ENCODE measurements at regions of chr10 and their contacts with region 1.

Region 1: DNA sequence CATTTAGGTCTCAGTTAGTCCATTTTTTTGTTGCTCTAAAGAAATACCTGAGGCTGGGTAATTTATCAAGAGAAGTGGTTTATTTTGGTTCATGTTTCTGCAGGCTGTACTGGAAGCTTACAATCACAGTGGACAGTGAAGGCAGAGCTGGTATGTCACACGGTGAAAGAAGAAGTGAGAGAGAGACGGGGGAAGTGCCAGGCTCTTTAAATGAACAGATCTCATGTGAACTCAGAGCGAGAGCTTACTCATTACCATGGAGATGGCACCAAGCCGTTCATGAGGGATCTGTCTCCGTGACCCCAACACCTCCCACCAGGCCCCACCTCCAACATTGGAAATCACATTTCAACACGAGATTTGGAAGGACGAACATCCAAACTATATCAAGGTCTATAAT is 18.9 kb upstream of the PNLIPRP3 start:
- DNase-seq: no peak
- ATAC-seq: no peak

Region 2: DNA sequence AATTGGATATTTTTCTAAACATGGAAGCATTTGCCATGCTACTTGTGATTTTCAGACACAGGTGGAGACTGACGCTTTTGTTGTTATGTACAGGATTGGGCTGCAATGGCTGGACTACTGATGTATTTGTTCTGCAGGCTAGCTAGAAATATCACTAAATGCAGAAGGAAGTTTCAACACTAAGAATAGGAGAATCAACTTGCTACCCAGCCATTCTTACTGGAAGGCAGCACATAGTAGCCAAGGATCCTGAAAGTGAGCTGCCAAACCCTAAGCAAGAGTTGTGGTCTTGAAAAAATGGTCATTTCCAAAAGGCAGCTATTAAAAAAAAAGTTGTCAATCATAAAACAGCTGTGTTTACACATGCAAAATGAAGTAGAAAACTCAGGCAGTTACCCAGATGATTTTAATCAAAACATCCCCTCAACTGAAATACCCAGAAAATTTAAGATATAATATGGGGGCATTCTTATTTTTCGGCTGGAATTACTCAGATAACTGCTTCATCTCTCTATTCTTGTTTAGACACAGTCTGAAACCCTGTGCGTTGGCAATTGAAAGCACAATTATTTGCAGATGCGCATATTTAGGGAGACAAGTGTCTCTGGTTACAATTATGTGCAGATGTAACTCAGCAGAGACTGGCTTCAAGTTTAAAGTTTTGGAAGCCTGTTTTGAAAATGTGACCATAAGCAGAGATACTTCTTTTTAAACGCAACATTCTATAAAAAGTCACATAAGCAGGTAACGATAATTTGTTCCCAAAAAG is 166.9 kb before region 1 on chr10:
- intact Hi-C with region 1: no loop called
- DNase-seq: no peak
- ATAC-seq: peak; percentile 64

Region 3: DNA sequence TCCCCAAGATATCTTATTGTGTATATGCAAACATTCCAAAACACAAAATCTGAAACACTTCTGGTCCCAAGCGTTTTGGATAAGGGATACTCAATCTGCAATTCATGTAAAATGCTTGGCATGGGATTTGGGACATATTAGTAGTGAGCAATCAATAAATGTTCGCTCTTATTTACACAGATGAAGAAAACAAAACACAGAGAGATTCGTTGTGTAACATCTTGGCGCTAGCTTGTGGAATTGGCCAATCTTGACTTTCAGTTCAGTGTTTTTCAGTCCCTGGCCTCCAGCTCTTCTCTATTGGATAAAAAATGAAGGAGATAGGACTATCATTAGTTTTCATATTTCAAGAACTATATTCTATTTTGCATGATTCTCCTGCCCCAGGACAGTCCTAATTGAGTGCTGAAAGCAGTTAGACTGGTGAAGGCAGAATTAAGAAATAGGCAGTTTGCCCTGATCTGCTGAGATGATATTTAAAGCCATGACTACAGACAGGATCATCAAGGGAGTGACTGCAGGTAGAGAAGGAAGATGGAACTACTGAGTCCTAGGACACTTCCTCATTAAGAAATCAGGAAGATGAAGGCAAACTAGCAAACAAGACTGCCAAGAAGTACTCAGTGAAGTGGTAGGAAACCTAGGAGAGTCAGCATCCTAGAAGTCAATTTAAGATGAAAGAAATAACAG is 20.7 kb after region 1 on chr10:
- intact Hi-C with region 1: loop called (anchors 2 kb)
- DNase-seq: no peak
- ATAC-seq: peak; percentile 83

Region 4: DNA sequence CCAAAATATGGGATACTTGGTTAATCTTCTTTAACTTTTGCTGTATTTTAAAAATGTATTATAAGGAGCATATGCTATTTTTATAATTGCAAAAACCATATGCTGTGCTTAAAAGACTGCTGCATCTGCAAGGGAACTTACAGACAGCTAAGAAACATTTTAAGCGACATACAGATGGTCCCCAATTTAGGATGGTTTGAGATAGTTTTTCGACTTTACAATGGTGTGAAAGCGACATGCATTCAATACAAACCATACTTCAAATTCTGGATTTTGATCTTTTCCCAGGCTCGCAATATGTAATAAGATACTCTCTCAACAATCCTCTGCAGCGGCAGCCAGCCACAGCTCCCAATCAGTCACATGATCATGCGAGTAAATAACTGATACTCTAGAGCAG is 523.1 kb after region 1 on chr10:
- intact Hi-C with region 1: no loop called
- DNase-seq: no peak
- ATAC-seq: no peak

Region 5: GRCh38 chr10:117653170-117653515 is 1244.4 kb after region 1 on chr10:
- intact Hi-C with region 1: no loop called
- DNase-seq: no peak
- ATAC-seq: no peak